Activated naive CD4-positive, alpha-beta T cell treated with anti-CD3 and anti-CD28 coated beads, Interleukin-2, amount 10 ng/mL, durations not matched to agents 7 days and 5 days (primary cell): ENCODE measurements at regions of chr2 and their contacts with region 1.

Region 1: GRCh38 chr2:215949991-215950404 is 63.4 kb downstream of the MREG start:
- DNase-seq: no peak
- H3K4me3 Mint-ChIP-seq: no peak overlapping the region
- H3K27ac Mint-ChIP-seq: no peak overlapping the region
- H3K4me1 Mint-ChIP-seq: peaks cover 5% of the 10 kb centered on the region
- H3K27me3 Mint-ChIP-seq: no peaks in the 10 kb centered on the region

Region 2: GRCh38 chr2:215280326-215280725 is 669.7 kb before region 1 on chr2:
- CTCF ChIA-PET with region 1: no interaction called
- DNase-seq: no peak
- H3K4me3 Mint-ChIP-seq: no peak overlapping the region
- H3K27ac Mint-ChIP-seq: no peak overlapping the region
- H3K4me1 Mint-ChIP-seq: no peaks in the 10 kb centered on the region
- H3K27me3 Mint-ChIP-seq: peaks cover 3% of the 10 kb centered on the region

Region 3: GRCh38 chr2:215931256-215931903 is 18.6 kb before region 1 on chr2:
- CTCF ChIA-PET with region 1: interaction called, 17 read pairs
- DNase-seq: peak; percentile 70
- H3K4me3 Mint-ChIP-seq: no peak overlapping the region
- H3K27ac Mint-ChIP-seq: no peak overlapping the region
- H3K4me1 Mint-ChIP-seq: no peaks in the 10 kb centered on the region
- H3K27me3 Mint-ChIP-seq: peaks cover 22% of the 10 kb centered on the region

Region 4: GRCh38 chr2:216006164-216006663 is 56.2 kb after region 1 on chr2:
- CTCF ChIA-PET with region 1: interaction called, 12 read pairs
- DNase-seq: peak; percentile 52
- H3K4me3 Mint-ChIP-seq: no peak overlapping the region
- H3K27ac Mint-ChIP-seq: peak overlapping the region; percentile 43
- H3K4me1 Mint-ChIP-seq: peaks cover 45% of the 10 kb centered on the region
- H3K27me3 Mint-ChIP-seq: no peaks in the 10 kb centered on the region

Region 5: GRCh38 chr2:216015722-216016464 is 65.9 kb after region 1 on chr2:
- CTCF ChIA-PET with region 1: interaction called, 54 read pairs
- DNase-seq: peak; percentile 81
- H3K4me3 Mint-ChIP-seq: peak overlapping the region; percentile 48
- H3K27ac Mint-ChIP-seq: peak overlapping the region; percentile 93
- H3K4me1 Mint-ChIP-seq: peaks cover 70% of the 10 kb centered on the region
- H3K27me3 Mint-ChIP-seq: peaks cover 6% of the 10 kb centered on the region

Region 6: GRCh38 chr2:216023055-216023648 is 73.2 kb after region 1 on chr2:
- CTCF ChIA-PET with region 1: interaction called, 54 read pairs
- DNase-seq: peak; percentile 66
- H3K4me3 Mint-ChIP-seq: no peak overlapping the region
- H3K27ac Mint-ChIP-seq: no peak overlapping the region
- H3K4me1 Mint-ChIP-seq: peaks cover 10% of the 10 kb centered on the region
- H3K27me3 Mint-ChIP-seq: no peaks in the 10 kb centered on the region